OCI-LY7 (cell line): ENCODE measurements at regions of chr13 and their contacts with region 1.

Region 1: GRCh38 chr13:75482070-75482819 is at the start of gene TBC1D4:
- DNase-seq: peak; percentile 91
- H3K4me3 ChIP-seq: peak within 1 kb of the TSS; percentile 76
- H3K27ac ChIP-seq: peak within 1 kb of the TSS; percentile 62
- H3K4me1 ChIP-seq: peaks cover 24% of the 10 kb centered on the region
- CTCF ChIP-seq: peak; percentile 94
- total RNA-seq, gene TBC1D4: 24.3 TPM in 2 replicates

Region 2: DNA sequence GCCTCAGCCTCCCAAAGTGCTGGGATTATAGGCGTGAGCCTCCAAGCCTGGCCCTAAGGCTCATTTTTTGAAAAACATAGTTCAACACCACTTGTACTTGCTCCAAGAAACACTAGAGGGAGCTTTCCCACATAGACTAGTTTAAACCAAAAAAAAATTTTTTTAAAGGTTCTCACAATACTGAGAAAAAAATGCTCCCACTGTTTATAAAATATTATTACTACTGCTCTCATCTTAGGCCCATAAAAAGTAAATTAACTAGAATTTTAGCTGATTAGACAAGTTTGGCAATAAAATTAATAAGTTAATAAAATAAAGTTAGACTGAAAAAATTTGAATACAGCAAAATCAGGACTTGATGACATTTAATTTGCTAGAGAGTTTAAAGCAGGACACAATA is 109.7 kb before region 1 on chr13:
- CTCF ChIA-PET with region 1: no interaction called
- POLR2A ChIA-PET with region 1: no interaction called
- intact Hi-C with region 1: loop called (anchors 1 kb)
- DNase-seq: peak; percentile 74
- H3K4me3 ChIP-seq: no peak overlapping the region
- H3K27ac ChIP-seq: no peak overlapping the region
- H3K4me1 ChIP-seq: peaks cover 47% of the 10 kb centered on the region
- CTCF ChIP-seq: peak; percentile 85

Region 3: GRCh38 chr13:75410207-75410606 is 72.0 kb before region 1 on chr13:
- CTCF ChIA-PET with region 1: interaction called, 4 read pairs
- POLR2A ChIA-PET with region 1: no interaction called
- intact Hi-C with region 1: loop called (anchors 2 kb)
- DNase-seq: peak; percentile 93
- H3K4me3 ChIP-seq: peak overlapping the region; percentile 50
- H3K27ac ChIP-seq: peak overlapping the region; percentile 91
- H3K4me1 ChIP-seq: peaks cover 82% of the 10 kb centered on the region
- CTCF ChIP-seq: no peak

Region 4: DNA sequence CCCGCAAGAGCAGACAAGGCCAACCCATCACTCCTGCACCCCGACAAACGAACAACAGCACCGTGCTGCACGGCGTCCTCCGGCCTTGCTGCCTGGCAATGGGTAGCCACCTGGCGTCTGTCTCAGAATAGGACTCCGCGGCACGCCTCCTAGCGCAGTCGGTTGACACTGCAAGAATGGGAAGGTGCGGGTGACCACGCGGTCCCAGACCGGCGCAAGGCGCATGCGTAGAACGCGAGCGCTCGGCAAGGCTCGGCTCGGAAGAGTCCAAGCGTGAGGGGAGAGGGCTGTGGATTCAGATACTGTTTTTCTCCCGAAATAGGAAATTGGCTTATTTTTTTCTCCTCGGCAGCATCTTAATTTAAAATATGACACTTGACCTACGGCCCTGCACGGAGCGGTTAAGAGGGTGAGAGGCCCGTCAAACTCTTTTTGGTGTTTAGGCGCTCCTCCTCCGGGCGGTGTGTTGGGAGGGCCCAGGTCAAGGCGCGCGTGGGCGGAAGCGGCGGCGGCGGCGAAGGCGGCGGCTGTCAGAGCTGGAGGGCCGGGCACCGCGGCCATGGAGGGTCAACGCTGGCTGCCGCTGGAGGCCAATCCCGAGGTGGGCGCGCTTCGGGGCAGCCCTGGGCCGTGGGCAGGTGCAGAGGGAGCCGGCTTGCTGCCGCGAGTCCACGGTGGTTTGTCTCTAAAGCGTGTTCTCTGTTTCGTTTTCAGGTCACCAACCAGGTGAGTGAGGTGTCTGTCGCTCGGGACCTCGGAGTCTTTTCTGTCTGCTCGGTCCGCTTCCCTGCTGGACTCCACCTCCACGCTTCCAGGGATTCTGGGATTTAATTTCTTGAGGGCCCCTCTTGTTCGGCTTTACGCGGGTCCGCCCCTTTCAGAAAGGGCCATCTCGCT is 67.3 kb after region 1 on chr13 and contains the start of gene UCHL3:
- CTCF ChIA-PET with region 1: no interaction called
- POLR2A ChIA-PET with region 1: interaction called, 5 read pairs
- intact Hi-C with region 1: loop called (anchors 1 kb)
- DNase-seq: peak; percentile 99
- H3K4me3 ChIP-seq: peak within 1 kb of the TSS; percentile 97
- H3K27ac ChIP-seq: peak within 1 kb of the TSS; percentile 43
- H3K4me1 ChIP-seq: peaks cover 31% of the 10 kb centered on the region
- CTCF ChIP-seq: peak; percentile 82
- total RNA-seq, gene UCHL3: 34.7 and 39.6 TPM in 2 replicates

Region 5: GRCh38 chr13:75635828-75636435 is 153.7 kb after region 1 on chr13 and contains the start of gene LMO7:
- CTCF ChIA-PET with region 1: no interaction called
- POLR2A ChIA-PET with region 1: no interaction called
- intact Hi-C with region 1: loop called (anchors 5 kb)
- DNase-seq: peak; percentile 58
- H3K4me3 ChIP-seq: peak within 1 kb of the TSS; percentile 71
- H3K27ac ChIP-seq: no peak within 1 kb of the TSS
- H3K4me1 ChIP-seq: peaks cover 23% of the 10 kb centered on the region
- CTCF ChIP-seq: no peak
- total RNA-seq, gene LMO7: 21.4 and 33.6 TPM in 2 replicates

Region 6: GRCh38 chr13:76014406-76015318 is 532.4 kb after region 1 on chr13:
- CTCF ChIA-PET with region 1: no interaction called
- POLR2A ChIA-PET with region 1: no interaction called
- intact Hi-C with region 1: no loop called
- DNase-seq: no peak
- H3K4me3 ChIP-seq: no peak overlapping the region
- H3K27ac ChIP-seq: no peak overlapping the region
- H3K4me1 ChIP-seq: no peaks in the 10 kb centered on the region
- CTCF ChIP-seq: no peak